Gastrocnemius medialis (tissue), 4 donors: ENCODE measurements at regions of chr4 and their contacts with region 1.

Region 1: GRCh38 chr4:24419181-24420034 is 164.9 kb downstream of the DHX15 start:
- DNase-seq: peak; percentile 40 to 72
- ATAC-seq: peak; percentile 71 to 77
- H3K4me3 ChIP-seq: no peak overlapping the region
- H3K27ac ChIP-seq: peak overlapping the region in 1 of 4 donors; percentile 4
- H3K4me1 ChIP-seq: peaks cover 10 to 13% of the 10 kb centered on the region in 2 donors
- H3K27me3 ChIP-seq: no peaks in the 10 kb centered on the region
- CTCF ChIP-seq: peak; percentile 77 to 94 (median 89)
- POLR2A ChIP-seq: no peak

Region 2: GRCh38 chr4:23866450-23867075 is 552.8 kb before region 1 on chr4:
- in situ Hi-C with region 1: no loop called
- intact Hi-C with region 1: loop called (anchors 10 kb)
- DNase-seq: no peak
- ATAC-seq: no peak
- H3K4me3 ChIP-seq: no peak overlapping the region
- H3K27ac ChIP-seq: peak overlapping the region; percentile 20 to 95 (median 52)
- H3K4me1 ChIP-seq: peaks cover 69 to 71% of the 10 kb centered on the region in 2 donors
- H3K27me3 ChIP-seq: no peaks in the 10 kb centered on the region
- CTCF ChIP-seq: no peak
- POLR2A ChIP-seq: no peak

Region 3: DNA sequence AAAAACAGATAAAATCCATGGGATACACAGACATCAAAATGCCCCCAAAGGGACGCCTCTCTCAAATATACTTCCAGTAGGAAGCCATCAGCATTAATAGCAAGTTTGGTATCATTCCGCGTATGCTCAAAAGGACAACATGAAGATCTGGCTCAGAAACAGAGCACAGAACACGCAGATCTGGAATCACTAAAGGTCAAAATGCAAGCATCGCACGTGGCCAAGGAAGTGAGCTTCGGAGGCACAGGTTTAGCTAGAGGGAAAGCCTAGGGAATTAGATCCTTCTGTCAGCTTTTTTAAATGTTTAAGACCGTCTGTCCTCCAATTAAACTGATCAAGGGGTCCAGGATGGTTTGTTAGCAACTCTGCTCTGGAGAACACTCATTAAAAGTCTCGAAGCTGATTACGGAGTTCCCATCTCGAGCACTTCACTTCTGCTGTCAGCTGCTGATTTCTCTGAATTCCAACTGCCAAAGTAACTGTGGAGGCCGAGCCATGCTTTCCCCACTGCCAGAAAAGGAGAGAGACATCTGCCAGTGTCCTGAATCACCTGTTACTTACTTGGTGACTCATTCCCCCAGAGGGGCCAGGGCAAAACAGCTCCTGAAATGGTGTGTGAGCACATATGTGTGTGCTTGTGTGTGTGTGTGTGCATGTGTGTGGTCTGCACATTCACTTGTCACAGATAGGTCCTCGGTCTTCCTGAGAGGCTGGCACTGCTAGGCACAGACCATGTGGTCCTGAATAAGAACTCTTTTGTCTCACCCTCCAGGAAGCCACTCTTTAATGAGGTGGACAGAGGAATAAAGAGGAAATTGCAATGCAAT is 351.8 kb before region 1 on chr4:
- in situ Hi-C with region 1: no loop called
- intact Hi-C with region 1: loop called (anchors 5 kb)
- DNase-seq: peak; percentile 83 to 89
- ATAC-seq: peak; percentile 100
- H3K4me3 ChIP-seq: peak overlapping the region; percentile 20 to 39 (median 28)
- H3K27ac ChIP-seq: peak overlapping the region; percentile 80 to 89 (median 86)
- H3K4me1 ChIP-seq: peaks cover 5 to 6% of the 10 kb centered on the region in 2 donors
- H3K27me3 ChIP-seq: no peaks in the 10 kb centered on the region
- CTCF ChIP-seq: no peak
- POLR2A ChIP-seq: no peak

Region 4: DNA sequence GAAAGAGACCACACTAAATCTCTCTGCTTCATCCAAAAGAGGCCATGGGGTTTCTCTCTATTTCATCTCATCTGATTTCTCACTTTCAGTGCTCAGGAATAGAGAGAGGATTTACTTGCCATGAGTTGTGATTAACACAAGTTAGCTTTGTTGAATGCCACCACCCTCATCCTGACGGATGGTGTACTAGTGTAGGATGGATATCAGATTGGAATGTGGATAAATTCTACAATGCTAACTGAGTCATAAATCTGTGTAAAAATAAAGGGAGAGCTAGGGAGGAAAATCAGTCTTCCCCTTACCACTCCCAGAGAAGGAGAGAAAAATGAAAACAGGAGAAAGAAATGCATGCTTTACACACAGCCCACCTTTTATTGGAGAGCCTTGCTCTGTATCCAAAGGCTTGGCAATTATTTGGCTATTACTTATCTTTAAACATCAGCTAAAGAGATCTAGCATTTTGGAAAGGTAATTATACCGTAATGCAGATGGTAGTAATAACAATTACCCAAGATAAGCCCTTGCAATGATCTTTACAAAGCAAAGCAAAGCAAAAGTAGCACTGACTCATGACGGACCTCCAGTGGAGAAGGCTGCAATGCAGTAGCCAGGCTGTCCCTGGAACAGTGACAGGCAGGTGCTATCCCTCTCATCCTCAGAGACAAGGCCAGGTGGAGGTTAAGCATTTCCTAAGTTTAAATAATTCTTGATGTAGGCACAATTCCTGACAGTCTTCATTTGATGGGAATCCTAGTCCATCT is 223.3 kb before region 1 on chr4:
- in situ Hi-C with region 1: no loop called
- intact Hi-C with region 1: loop called (anchors 5 kb)
- DNase-seq: no peak
- ATAC-seq: peak in 1 of 2 donors; percentile 58
- H3K4me3 ChIP-seq: no peak overlapping the region
- H3K27ac ChIP-seq: peak overlapping the region in 3 of 4 donors; percentile 42 to 58 (median 43)
- H3K4me1 ChIP-seq: peaks cover 0 to 8% of the 10 kb centered on the region in 2 donors
- H3K27me3 ChIP-seq: no peaks in the 10 kb centered on the region
- CTCF ChIP-seq: peak in 2 of 5 experiments; percentile 9 to 25
- POLR2A ChIP-seq: no peak

Region 5: DNA sequence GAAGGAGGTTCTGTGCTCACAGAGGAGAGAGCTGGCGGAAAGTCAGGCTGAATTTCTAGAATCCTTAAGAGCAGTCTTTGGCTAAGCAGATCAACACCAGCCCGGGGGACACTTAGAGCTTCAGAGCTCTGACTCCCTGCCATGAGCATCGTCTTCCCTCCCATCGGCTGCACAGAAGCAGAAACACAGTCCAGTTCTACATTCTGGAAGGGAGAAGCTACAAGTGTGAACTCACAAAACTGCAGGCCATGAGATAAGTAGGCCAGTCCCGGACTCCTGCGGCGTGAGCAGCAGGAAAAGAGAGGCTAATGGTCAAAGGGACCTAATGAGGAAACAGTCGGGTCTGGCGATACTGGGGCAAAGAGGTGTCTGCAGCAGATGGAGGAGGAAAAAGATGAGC is 46.5 kb before region 1 on chr4:
- in situ Hi-C with region 1: no loop called
- intact Hi-C with region 1: no loop called
- DNase-seq: no peak
- ATAC-seq: no peak
- H3K4me3 ChIP-seq: no peak overlapping the region
- H3K27ac ChIP-seq: no peak overlapping the region
- H3K4me1 ChIP-seq: peaks cover 6 to 11% of the 10 kb centered on the region in 2 donors
- H3K27me3 ChIP-seq: no peaks in the 10 kb centered on the region
- CTCF ChIP-seq: no peak
- POLR2A ChIP-seq: no peak

Region 6: GRCh38 chr4:24570574-24571236 is 151.3 kb after region 1 on chr4:
- in situ Hi-C with region 1: no loop called
- intact Hi-C with region 1: no loop called
- DNase-seq: no peak
- ATAC-seq: no peak
- H3K4me3 ChIP-seq: no peak overlapping the region
- H3K27ac ChIP-seq: no peak overlapping the region
- H3K4me1 ChIP-seq: peaks cover 16 to 35% of the 10 kb centered on the region in 2 donors
- H3K27me3 ChIP-seq: no peaks in the 10 kb centered on the region
- CTCF ChIP-seq: no peak
- POLR2A ChIP-seq: no peak